B cell (primary cell): ENCODE measurements at regions of chr6 and their contacts with region 1.

Region 1: DNA sequence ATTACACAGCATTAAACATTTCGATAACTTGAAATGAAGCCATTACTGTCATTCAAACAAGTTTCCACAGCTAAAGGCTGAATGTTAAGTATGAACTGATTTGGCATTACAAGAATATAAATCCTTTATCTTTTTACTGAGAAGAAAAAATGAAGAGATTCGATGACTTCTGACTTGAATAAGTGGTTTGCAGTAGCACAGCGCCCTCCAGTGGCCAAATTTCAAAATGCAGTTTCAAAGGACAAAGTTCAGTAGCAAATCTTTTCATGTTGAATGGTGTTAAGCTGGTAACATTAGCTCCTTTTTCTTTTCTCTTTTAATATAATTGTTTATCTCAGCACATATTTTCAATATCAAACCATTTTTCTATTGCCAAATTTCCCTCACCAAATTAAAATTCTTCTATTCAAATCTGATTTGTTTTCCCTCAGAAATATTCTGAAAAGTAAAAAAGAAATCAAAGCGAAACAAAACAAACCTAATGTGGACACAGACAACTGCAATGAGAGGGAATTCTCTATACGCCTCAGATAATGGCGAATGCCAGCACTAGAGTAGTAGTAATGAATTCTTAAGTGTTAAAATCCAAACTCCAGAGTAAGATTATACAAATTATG is 145.7 kb downstream of the BTBD9 start:
- DNase-seq: peak; percentile 82
- ATAC-seq: peak; percentile 45
- H3K4me3 ChIP-seq: no peak overlapping the region
- H3K4me3 Mint-ChIP-seq: no peak overlapping the region
- H3K27ac ChIP-seq: no peak overlapping the region
- H3K27ac Mint-ChIP-seq: no peak overlapping the region
- H3K4me1 ChIP-seq: no peaks in the 10 kb centered on the region
- H3K4me1 Mint-ChIP-seq: peaks cover 11% of the 10 kb centered on the region
- H3K27me3 ChIP-seq: no peaks in the 10 kb centered on the region
- H3K27me3 Mint-ChIP-seq: no peaks in the 10 kb centered on the region
- CTCF ChIP-seq: peak; percentile 98

Region 2: GRCh38 chr6:37210313-37210968 is 1283.6 kb before region 1 on chr6:
- CTCF ChIA-PET with region 1: no interaction called
- POLR2A ChIA-PET with region 1: no interaction called
- intact Hi-C with region 1: no loop called
- DNase-seq: peak; percentile 85
- ATAC-seq: peak; percentile 71
- H3K4me3 ChIP-seq: no peak overlapping the region
- H3K4me3 Mint-ChIP-seq: no peak overlapping the region
- H3K27ac ChIP-seq: no peak overlapping the region
- H3K27ac Mint-ChIP-seq: no peak overlapping the region
- H3K4me1 ChIP-seq: peaks cover 4 to 12% of the 10 kb centered on the region in 2 donors
- H3K4me1 Mint-ChIP-seq: peaks cover 14% of the 10 kb centered on the region
- H3K27me3 ChIP-seq: peaks cover 0 to 4% (median 0%) of the 10 kb centered on the region in 4 experiments
- H3K27me3 Mint-ChIP-seq: no peaks in the 10 kb centered on the region
- CTCF ChIP-seq: peak; percentile 93

Region 3: DNA sequence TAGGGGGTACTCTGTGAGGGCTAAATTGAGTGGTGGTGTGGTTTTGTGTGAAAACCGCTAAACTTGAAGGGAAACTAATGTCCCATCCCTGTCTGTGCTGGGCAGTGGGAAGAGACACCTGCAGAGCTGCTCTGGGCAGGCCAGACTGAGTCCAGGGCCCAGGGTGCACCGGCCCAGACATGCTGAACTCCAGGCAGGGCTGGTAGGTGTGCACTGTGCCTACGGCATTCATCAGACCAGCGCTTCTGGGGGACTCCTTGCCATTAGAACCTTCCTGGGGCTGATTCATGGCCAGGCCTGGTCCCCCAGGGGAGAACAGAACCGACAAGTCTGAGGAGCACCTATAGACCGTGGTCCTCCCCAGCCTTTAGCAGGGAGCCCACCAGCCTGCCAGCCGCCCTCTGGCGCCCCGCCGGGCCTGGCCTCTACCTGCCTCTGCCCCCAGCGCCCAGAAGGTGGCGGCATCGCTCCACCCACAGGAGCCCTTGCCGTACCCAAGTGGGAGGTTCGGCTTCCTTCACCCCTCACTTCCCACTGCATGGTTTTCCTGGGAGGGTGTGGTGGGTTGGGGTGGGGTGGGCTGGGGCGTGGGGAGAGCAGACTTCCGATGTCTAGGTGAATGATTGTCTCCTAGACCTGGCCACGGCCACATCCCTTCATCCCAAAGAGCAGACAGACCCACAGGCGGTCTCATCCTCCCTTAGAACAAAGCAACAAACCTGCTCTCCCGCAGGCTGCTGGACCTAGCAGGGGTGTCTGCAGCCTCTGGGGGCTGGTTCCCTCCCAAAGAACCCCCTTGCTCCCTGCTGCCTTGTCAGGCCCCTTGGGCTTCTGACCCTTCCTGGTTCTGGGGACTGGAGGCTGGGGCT is 1009.9 kb before region 1 on chr6:
- CTCF ChIA-PET with region 1: interaction called, 4 read pairs
- POLR2A ChIA-PET with region 1: no interaction called
- intact Hi-C with region 1: loop called (anchors 5 kb)
- DNase-seq: peak; percentile 81
- ATAC-seq: peak; percentile 91
- H3K4me3 ChIP-seq: no peak overlapping the region
- H3K4me3 Mint-ChIP-seq: no peak overlapping the region
- H3K27ac ChIP-seq: peak overlapping the region in 1 of 2 donors; percentile 19
- H3K27ac Mint-ChIP-seq: no peak overlapping the region
- H3K4me1 ChIP-seq: peaks cover 0 to 14% of the 10 kb centered on the region in 2 donors
- H3K4me1 Mint-ChIP-seq: peaks cover 9% of the 10 kb centered on the region
- H3K27me3 ChIP-seq: no peaks in the 10 kb centered on the region
- H3K27me3 Mint-ChIP-seq: no peaks in the 10 kb centered on the region
- CTCF ChIP-seq: peak; percentile 86

Region 4: GRCh38 chr6:37791156-37791919 is 702.7 kb before region 1 on chr6:
- CTCF ChIA-PET with region 1: interaction called, 6 read pairs
- POLR2A ChIA-PET with region 1: no interaction called
- intact Hi-C with region 1: loop called (anchors 1 kb)
- DNase-seq: peak; percentile 72
- ATAC-seq: peak; percentile 100
- H3K4me3 ChIP-seq: no peak overlapping the region
- H3K4me3 Mint-ChIP-seq: no peak overlapping the region
- H3K27ac ChIP-seq: no peak overlapping the region
- H3K27ac Mint-ChIP-seq: peak overlapping the region; percentile 17
- H3K4me1 ChIP-seq: peaks cover 0 to 3% of the 10 kb centered on the region in 2 donors
- H3K4me1 Mint-ChIP-seq: peaks cover 6% of the 10 kb centered on the region
- H3K27me3 ChIP-seq: no peaks in the 10 kb centered on the region
- H3K27me3 Mint-ChIP-seq: peaks cover 7% of the 10 kb centered on the region
- CTCF ChIP-seq: peak; percentile 88

Region 5: DNA sequence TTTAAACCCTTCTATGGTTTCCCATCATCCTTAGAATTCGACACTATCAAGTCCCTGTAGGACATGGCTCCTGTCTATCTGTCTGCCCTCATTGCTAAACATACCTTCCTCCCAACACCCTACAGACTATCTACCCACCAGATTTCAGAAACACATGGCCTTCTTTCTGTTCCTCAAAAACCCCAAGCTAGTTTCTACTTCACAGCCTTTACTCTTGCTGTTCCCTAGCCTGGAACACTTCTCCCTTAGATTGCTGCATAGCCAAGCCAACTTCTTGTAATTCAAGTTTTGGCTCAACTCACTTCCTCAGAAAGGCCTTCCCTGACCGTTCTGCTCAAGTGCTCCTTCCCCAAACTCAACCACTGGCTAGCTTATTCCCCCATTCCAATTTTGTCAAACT is 10.5 kb before region 1 on chr6:
- CTCF ChIA-PET with region 1: interaction called, 15 read pairs
- POLR2A ChIA-PET with region 1: no interaction called
- intact Hi-C with region 1: no loop called
- DNase-seq: peak; percentile 60
- ATAC-seq: peak; percentile 57
- H3K4me3 ChIP-seq: no peak overlapping the region
- H3K4me3 Mint-ChIP-seq: no peak overlapping the region
- H3K27ac ChIP-seq: peak overlapping the region in 1 of 2 donors; percentile 41
- H3K27ac Mint-ChIP-seq: no peak overlapping the region
- H3K4me1 ChIP-seq: peaks cover 21 to 25% of the 10 kb centered on the region in 2 donors
- H3K4me1 Mint-ChIP-seq: peaks cover 8% of the 10 kb centered on the region
- H3K27me3 ChIP-seq: no peaks in the 10 kb centered on the region
- H3K27me3 Mint-ChIP-seq: no peaks in the 10 kb centered on the region
- CTCF ChIP-seq: no peak

Region 6: DNA sequence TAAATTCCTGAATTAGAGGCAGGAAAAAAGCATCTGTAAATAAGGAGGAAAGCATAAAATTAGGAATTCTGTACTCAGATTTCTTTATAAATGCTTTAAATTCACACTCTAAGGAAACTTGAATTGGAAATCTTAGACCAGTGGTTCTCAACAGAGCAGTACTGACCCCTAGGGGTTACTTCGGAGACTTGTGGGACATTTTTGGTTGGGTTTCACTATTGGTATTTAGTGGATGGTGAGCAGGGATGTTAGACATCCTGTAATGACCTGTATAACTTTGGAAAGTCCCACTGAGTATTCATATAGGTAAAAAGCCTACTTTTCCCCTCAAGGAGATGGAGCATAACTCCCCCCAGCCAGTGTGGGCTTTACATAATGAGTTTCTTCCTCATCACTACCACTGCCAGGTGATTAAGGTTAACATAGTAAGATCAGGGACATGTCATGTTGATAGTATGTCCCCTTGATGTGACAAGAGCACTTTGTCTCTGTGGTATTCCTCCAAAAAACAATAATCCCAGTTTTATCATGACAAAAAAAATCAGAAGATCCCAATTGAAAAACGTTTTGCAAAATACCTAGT is 177.9 kb after region 1 on chr6:
- CTCF ChIA-PET with region 1: interaction called, 5 read pairs
- POLR2A ChIA-PET with region 1: no interaction called
- intact Hi-C with region 1: loop called (anchors 1 kb)
- DNase-seq: peak; percentile 70
- ATAC-seq: peak; percentile 68
- H3K4me3 ChIP-seq: no peak overlapping the region
- H3K4me3 Mint-ChIP-seq: no peak overlapping the region
- H3K27ac ChIP-seq: no peak overlapping the region
- H3K27ac Mint-ChIP-seq: peak overlapping the region; percentile 20
- H3K4me1 ChIP-seq: peaks cover 27 to 33% of the 10 kb centered on the region in 2 donors
- H3K4me1 Mint-ChIP-seq: peaks cover 40% of the 10 kb centered on the region
- H3K27me3 ChIP-seq: no peaks in the 10 kb centered on the region
- H3K27me3 Mint-ChIP-seq: no peaks in the 10 kb centered on the region
- CTCF ChIP-seq: peak; percentile 91